Caco-2 (cell line): ENCODE measurements at regions of chr11 and their contacts with region 1.

Region 1: DNA sequence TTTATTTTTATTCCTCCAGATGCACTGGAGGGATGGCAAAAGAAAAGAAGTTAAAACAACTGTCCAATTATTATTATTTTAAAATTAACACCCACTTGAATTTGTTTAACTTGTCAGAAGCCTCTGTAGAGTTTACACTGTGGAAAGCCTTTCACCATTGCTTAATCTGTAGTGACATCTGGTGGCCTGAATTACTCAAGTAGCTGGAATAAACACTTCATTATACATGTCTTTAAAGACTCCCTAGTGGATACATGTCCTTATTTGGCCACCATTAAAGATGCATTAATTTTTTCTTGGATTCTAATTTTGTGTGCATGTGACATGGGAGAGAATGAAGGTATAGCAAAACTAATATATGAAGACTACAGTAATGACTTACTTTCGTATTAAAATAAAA is 1496.5 kb downstream of the FAM181B start:
- DNase-seq: peak; percentile 40 to 73
- H3K4me3 ChIP-seq: no peak overlapping the region
- H3K4me3 Mint-ChIP-seq: no peak overlapping the region
- H3K27ac Mint-ChIP-seq: no peak overlapping the region
- H3K4me1 ChIP-seq: peaks cover 7% of the 10 kb centered on the region; the same call in 1 of the 2 replicates
- H3K4me1 Mint-ChIP-seq: no peaks in the 10 kb centered on the region
- H3K27me3 ChIP-seq: no peaks in the 10 kb centered on the region
- H3K27me3 Mint-ChIP-seq: no peaks in the 10 kb centered on the region
- CTCF ChIP-seq: peak; percentile 77 to 82

Region 2: GRCh38 chr11:79708300-79708932 is 1528.7 kb before region 1 on chr11:
- CTCF ChIA-PET with region 1: no interaction called
- POLR2A ChIA-PET with region 1: no interaction called
- intact Hi-C with region 1: loop called (anchors 1 kb)
- DNase-seq: peak; percentile 62 to 71
- H3K4me3 ChIP-seq: no peak overlapping the region
- H3K4me3 Mint-ChIP-seq: no peak overlapping the region
- H3K27ac Mint-ChIP-seq: no peak overlapping the region
- H3K4me1 ChIP-seq: no peaks in the 10 kb centered on the region
- H3K4me1 Mint-ChIP-seq: no peaks in the 10 kb centered on the region
- H3K27me3 ChIP-seq: no peaks in the 10 kb centered on the region
- H3K27me3 Mint-ChIP-seq: no peaks in the 10 kb centered on the region
- CTCF ChIP-seq: peak; percentile 77 to 84

Region 3: GRCh38 chr11:80155412-80156017 is 1081.6 kb before region 1 on chr11:
- CTCF ChIA-PET with region 1: no interaction called
- POLR2A ChIA-PET with region 1: no interaction called
- intact Hi-C with region 1: loop called (anchors 1 kb)
- DNase-seq: peak in 1 of 2 experiments; percentile 63
- H3K4me3 ChIP-seq: no peak overlapping the region
- H3K4me3 Mint-ChIP-seq: no peak overlapping the region
- H3K27ac Mint-ChIP-seq: no peak overlapping the region
- H3K4me1 ChIP-seq: no peaks in the 10 kb centered on the region
- H3K4me1 Mint-ChIP-seq: no peaks in the 10 kb centered on the region
- H3K27me3 ChIP-seq: no peaks in the 10 kb centered on the region
- H3K27me3 Mint-ChIP-seq: peaks cover 5% of the 10 kb centered on the region
- CTCF ChIP-seq: peak; percentile 61 to 73

Region 4: GRCh38 chr11:80414181-80415165 is 822.7 kb before region 1 on chr11:
- CTCF ChIA-PET with region 1: no interaction called
- POLR2A ChIA-PET with region 1: no interaction called
- intact Hi-C with region 1: loop called (anchors 10 kb)
- DNase-seq: no peak
- H3K4me3 ChIP-seq: no peak overlapping the region
- H3K4me3 Mint-ChIP-seq: no peak overlapping the region
- H3K27ac Mint-ChIP-seq: no peak overlapping the region
- H3K4me1 ChIP-seq: no peaks in the 10 kb centered on the region
- H3K4me1 Mint-ChIP-seq: no peaks in the 10 kb centered on the region
- H3K27me3 ChIP-seq: no peaks in the 10 kb centered on the region
- H3K27me3 Mint-ChIP-seq: no peaks in the 10 kb centered on the region
- CTCF ChIP-seq: no peak

Region 5: GRCh38 chr11:80727315-80728230 is 509.6 kb before region 1 on chr11:
- CTCF ChIA-PET with region 1: no interaction called
- POLR2A ChIA-PET with region 1: no interaction called
- intact Hi-C with region 1: loop called (anchors 1 kb)
- DNase-seq: peak; percentile 56 to 58
- H3K4me3 ChIP-seq: no peak overlapping the region
- H3K4me3 Mint-ChIP-seq: no peak overlapping the region
- H3K27ac Mint-ChIP-seq: no peak overlapping the region
- H3K4me1 ChIP-seq: no peaks in the 10 kb centered on the region
- H3K4me1 Mint-ChIP-seq: peaks cover 6% of the 10 kb centered on the region
- H3K27me3 ChIP-seq: no peaks in the 10 kb centered on the region
- H3K27me3 Mint-ChIP-seq: peaks cover 2% of the 10 kb centered on the region
- CTCF ChIP-seq: peak in 1 of 2 experiments; percentile 77

Region 6: GRCh38 chr11:81005595-81005994 is 231.5 kb before region 1 on chr11:
- CTCF ChIA-PET with region 1: no interaction called
- POLR2A ChIA-PET with region 1: no interaction called
- intact Hi-C with region 1: loop called (anchors 2 kb)
- DNase-seq: peak in 1 of 2 experiments; percentile 17
- H3K4me3 ChIP-seq: no peak overlapping the region
- H3K4me3 Mint-ChIP-seq: no peak overlapping the region
- H3K27ac Mint-ChIP-seq: no peak overlapping the region
- H3K4me1 ChIP-seq: peaks cover 8% of the 10 kb centered on the region; the same call in 1 of the 2 replicates
- H3K4me1 Mint-ChIP-seq: peaks cover 7% of the 10 kb centered on the region
- H3K27me3 ChIP-seq: no peaks in the 10 kb centered on the region
- H3K27me3 Mint-ChIP-seq: peaks cover 4% of the 10 kb centered on the region
- CTCF ChIP-seq: no peak

Region 7: GRCh38 chr11:81165164-81165563 is 72.0 kb before region 1 on chr11:
- CTCF ChIA-PET with region 1: interaction called, 4 read pairs
- POLR2A ChIA-PET with region 1: no interaction called
- intact Hi-C with region 1: loop called (anchors 2 kb)
- DNase-seq: peak in 1 of 2 experiments; percentile 42
- H3K4me3 ChIP-seq: no peak overlapping the region
- H3K4me3 Mint-ChIP-seq: no peak overlapping the region
- H3K27ac Mint-ChIP-seq: no peak overlapping the region
- H3K4me1 ChIP-seq: no peaks in the 10 kb centered on the region
- H3K4me1 Mint-ChIP-seq: no peaks in the 10 kb centered on the region
- H3K27me3 ChIP-seq: no peaks in the 10 kb centered on the region
- H3K27me3 Mint-ChIP-seq: peaks cover 6% of the 10 kb centered on the region
- CTCF ChIP-seq: peak in 1 of 2 experiments; percentile 59